ENCODE measurements at regions of chr1 and their contacts with region 1.

Region 1: DNA sequence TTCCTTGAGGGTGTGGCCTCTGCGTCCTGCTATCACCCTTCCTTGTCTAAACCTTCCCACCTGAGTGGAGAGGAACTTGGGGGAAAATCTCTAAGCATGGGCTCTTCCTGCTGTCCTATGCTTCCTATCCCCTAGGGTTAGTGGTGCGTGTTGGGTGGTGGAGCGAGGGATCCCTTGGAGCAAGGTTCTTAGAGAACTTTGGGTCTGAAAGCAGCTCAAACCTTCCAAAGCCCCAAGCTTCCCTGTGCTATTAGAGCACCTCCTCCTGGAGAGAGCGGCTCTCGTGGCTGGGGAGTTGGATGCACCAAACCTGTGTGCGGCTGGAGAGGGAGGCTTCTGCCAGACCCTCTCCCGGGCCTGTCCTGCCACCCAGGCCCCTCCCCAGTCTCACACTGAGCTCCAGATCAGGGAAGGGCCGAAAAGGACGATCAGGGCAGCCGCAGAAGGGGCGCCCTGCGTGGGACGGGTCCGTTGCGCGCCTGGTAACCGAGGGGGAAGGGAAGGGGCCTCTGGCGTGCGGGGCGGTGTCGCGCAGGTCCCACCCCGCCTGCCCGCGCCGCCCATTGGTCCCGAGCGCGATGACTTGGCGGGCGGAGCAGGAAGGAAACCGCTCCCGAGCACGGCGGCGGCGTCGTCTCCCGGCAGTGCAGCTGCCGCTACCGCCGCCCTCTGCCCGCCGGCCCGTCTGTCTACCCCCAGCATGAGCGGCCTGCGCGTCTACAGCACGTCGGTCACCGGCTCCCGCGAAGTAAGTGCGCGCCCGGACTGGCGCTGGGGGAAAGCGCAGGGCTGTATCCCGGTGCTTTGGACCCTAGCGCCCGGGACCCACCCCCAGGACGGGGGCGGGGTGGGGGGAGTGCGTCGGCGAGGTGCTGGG is at the start of gene SH3BGRL3:
- DNase-seq: peak; percentile 90
- H3K4me3 Mint-ChIP-seq: peak within 1 kb of the TSS; percentile 81
- H3K27ac Mint-ChIP-seq: peak within 1 kb of the TSS; percentile 98
- H3K4me1 Mint-ChIP-seq: peaks cover 87% of the 10 kb centered on the region
- H3K27me3 Mint-ChIP-seq: no peaks in the 10 kb centered on the region
- total RNA-seq, gene SH3BGRL3: 662 to 665 TPM

Region 2: GRCh38 chr1:26169669-26170471 is 109.8 kb before region 1 on chr1 and contains the start of gene ZNF593:
- CTCF ChIA-PET with region 1: interaction called, 13 read pairs
- POLR2A ChIA-PET with region 1: interaction called, 9 read pairs
- DNase-seq: peak; percentile 90
- H3K4me3 Mint-ChIP-seq: peak within 1 kb of the TSS; percentile 83
- H3K27ac Mint-ChIP-seq: peak within 1 kb of the TSS; percentile 70
- H3K4me1 Mint-ChIP-seq: peaks cover 32% of the 10 kb centered on the region
- H3K27me3 Mint-ChIP-seq: no peaks in the 10 kb centered on the region
- total RNA-seq, gene ZNF593: 20.3 to 22.9 TPM

Region 3: DNA sequence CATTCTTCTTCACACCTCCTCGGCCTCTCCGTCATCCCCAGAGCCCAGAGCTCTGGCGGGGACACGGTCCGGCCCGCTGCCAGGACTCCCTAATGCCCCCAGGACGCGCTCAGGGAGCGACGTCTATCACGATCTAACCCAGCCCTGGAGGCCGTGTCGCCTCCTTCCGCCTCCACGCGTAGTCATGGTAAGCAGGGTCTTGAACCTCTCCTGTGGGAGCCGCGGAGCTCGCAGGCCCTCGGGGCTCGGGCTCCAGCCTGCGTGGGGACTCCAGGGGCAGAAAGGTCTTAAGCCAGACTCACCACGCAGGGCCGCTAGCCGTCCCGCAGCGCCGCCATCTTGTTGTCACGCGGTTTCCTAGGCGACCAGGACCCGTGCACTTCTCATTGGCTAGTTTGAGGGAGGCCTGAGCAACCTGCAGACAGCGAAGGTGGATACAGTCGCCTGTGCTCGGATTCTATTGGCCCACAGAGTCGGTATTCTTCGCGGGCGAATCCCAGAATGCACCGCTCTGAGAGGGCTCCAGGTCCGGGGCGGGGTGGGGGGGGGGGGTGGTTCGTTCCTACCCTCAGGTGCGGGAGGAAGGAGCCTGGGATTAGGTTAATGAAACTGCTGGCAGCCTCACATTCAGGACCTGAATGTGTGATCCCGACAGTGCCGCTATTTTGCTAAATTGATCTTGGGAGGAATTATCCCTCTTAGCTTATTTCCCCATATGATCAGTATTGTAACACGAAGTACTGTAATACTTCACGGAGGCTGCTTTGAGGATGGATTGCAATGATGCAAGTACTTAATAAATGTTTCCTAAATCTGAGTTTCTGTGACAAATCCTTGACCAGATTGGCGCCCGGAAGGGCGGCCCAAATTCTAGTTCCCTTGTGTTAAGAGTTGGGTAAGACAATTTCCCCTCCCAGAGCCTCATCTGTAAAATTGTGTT is 26.9 kb after region 1 on chr1 and contains the start of gene UBXN11:
- CTCF ChIA-PET with region 1: interaction called, 883 read pairs
- POLR2A ChIA-PET with region 1: interaction called, 1,302 read pairs
- DNase-seq: peak; percentile 96
- H3K4me3 Mint-ChIP-seq: peak within 1 kb of the TSS; percentile 90
- H3K27ac Mint-ChIP-seq: peak within 1 kb of the TSS; percentile 98
- H3K4me1 Mint-ChIP-seq: peaks cover 43% of the 10 kb centered on the region
- H3K27me3 Mint-ChIP-seq: no peaks in the 10 kb centered on the region
- total RNA-seq, gene UBXN11: 46.9 to 49.9 TPM

Region 4: GRCh38 chr1:26378088-26378878 is 98.6 kb after region 1 on chr1:
- CTCF ChIA-PET with region 1: interaction called, 22 read pairs
- POLR2A ChIA-PET with region 1: interaction called, 26 read pairs
- DNase-seq: peak; percentile 89
- H3K4me3 Mint-ChIP-seq: peak overlapping the region; percentile 52
- H3K27ac Mint-ChIP-seq: peak overlapping the region; percentile 91
- H3K4me1 Mint-ChIP-seq: peaks cover 75% of the 10 kb centered on the region
- H3K27me3 Mint-ChIP-seq: no peaks in the 10 kb centered on the region

Region 5: DNA sequence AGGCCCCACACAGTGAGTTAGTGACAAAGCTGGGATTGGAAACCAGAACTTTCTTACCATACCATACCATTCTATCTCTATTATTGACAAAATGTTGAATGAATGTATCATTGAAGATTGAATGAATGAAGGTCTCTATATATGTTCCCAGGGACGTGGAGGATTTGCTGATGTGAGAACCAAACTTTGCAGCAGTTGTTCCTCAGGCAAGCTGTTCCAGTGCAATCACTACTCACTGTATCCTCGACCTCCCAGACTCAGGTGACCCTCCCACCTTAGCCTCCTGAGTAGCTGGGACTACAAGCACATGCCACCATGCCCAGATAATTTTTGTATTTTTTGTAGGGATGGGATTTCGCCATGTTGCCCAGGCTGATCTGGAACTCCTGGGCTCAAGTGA is 119.3 kb after region 1 on chr1:
- CTCF ChIA-PET with region 1: interaction called, 14 read pairs
- POLR2A ChIA-PET with region 1: no interaction called
- DNase-seq: no peak
- H3K4me3 Mint-ChIP-seq: no peak overlapping the region
- H3K27ac Mint-ChIP-seq: no peak overlapping the region
- H3K4me1 Mint-ChIP-seq: peaks cover 4% of the 10 kb centered on the region
- H3K27me3 Mint-ChIP-seq: peaks cover 19% of the 10 kb centered on the region